A673 (cell line): ENCODE measurements at regions of chr15 and their contacts with region 1.

Region 1: DNA sequence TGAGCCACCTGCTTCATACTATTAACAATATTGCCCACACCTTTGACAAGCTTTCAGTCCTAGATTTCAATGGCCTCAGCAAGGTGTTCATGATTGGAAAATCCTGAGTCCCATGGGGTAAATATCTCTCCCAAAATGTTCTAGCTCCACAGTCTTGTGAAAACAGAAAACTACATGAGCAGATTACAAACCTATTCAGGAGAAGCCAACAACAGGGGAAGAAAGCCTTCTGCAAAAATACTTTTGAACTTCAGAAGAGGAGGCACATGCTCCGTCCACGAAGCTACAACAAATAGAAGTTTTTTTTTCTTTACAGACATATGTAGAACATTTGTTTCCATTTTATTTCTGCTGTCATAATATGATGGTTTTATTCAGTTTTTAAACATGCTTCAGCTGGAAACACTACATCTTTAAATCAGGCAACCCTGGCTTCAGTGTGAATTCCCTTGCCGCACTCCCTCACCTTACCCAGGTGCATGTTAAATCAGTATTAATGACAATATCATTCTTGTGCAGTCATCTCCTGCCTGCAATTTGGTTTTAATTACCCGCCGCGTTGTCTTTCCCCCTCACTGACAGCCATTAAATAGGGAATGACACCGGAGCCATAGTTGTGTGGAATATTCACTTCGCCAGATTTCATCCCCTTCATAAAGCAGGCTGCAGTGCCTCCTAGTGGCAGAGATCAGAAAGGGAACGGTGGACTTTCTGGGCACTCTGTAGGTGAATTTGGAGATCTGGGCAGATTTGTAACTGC is 725.5 kb upstream of the ARRDC4 start:
- DNase-seq: peak; percentile 93
- H3K4me3 ChIP-seq: peak overlapping the region; percentile 44
- H3K27ac ChIP-seq: peak overlapping the region; percentile 94
- H3K4me1 ChIP-seq: peaks cover 46% of the 10 kb centered on the region
- H3K27me3 ChIP-seq: no peaks in the 10 kb centered on the region
- CTCF ChIP-seq: peak; percentile 95

Region 2: GRCh38 chr15:96585484-96586386 is 649.3 kb before region 1 on chr15:
- CTCF ChIA-PET with region 1: no interaction called
- POLR2A ChIA-PET with region 1: no interaction called
- intact Hi-C with region 1: loop called (anchors 5 kb)
- DNase-seq: peak; percentile 70
- H3K4me3 ChIP-seq: no peak overlapping the region
- H3K27ac ChIP-seq: no peak overlapping the region
- H3K4me1 ChIP-seq: peaks cover 35% of the 10 kb centered on the region
- H3K27me3 ChIP-seq: no peaks in the 10 kb centered on the region
- CTCF ChIP-seq: peak; percentile 72

Region 3: DNA sequence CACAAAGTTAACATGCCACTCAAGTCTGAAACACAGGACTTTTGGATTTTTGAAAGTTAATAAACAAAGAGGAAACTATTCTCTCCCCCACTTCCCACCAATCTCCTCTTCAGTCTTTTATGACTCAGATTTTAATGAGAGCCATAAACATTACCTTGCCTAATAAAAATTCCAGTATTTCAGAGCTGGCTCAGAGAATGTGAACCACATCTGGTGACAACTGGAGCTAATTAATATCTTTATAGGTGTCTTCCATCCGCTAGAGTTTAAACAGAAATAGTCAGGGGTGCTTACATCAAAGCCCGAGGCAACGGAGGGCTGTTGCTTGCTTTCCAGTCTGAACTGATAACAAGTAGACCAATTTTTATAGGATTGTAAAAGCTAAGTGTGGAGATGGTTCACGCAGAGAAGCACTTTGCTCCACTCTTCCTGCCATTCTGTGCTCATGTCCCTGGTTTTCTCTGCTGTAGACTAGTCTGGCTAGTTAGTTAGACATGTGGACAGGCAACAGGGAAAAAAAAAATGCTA is 541.0 kb before region 1 on chr15:
- CTCF ChIA-PET with region 1: no interaction called
- POLR2A ChIA-PET with region 1: no interaction called
- intact Hi-C with region 1: loop called (anchors 2 kb)
- DNase-seq: peak; percentile 89
- H3K4me3 ChIP-seq: peak overlapping the region; percentile 3
- H3K27ac ChIP-seq: peak overlapping the region; percentile 72
- H3K4me1 ChIP-seq: peaks cover 56% of the 10 kb centered on the region
- H3K27me3 ChIP-seq: no peaks in the 10 kb centered on the region
- CTCF ChIP-seq: no peak

Region 4: DNA sequence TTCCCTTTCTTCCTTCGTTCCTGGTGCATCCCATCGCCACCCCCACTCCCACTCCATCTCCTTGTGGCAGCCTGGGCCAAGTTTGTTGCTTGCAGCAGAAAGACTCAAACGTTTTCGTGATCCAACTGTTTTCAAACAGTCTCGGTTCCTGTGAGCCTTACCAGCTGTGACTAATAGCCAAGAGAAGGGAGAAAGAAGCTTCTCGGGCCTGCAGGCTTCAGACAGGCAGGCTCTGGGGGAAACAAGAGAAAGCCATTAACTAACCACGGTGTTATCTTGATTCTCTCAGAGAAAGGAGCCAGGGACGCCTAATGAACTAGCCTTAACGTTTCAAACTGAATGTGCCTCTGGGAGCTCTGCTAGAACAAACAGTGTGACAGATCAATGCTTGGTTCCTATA is 162.5 kb before region 1 on chr15:
- CTCF ChIA-PET with region 1: interaction called, 12 read pairs
- POLR2A ChIA-PET with region 1: no interaction called
- intact Hi-C with region 1: loop called (anchors 1 kb)
- DNase-seq: no peak
- H3K4me3 ChIP-seq: no peak overlapping the region
- H3K27ac ChIP-seq: peak overlapping the region; percentile 72
- H3K4me1 ChIP-seq: peaks cover 56% of the 10 kb centered on the region
- H3K27me3 ChIP-seq: no peaks in the 10 kb centered on the region
- CTCF ChIP-seq: no peak

Region 5: GRCh38 chr15:97092656-97093055 is 142.4 kb before region 1 on chr15:
- CTCF ChIA-PET with region 1: no interaction called
- POLR2A ChIA-PET with region 1: no interaction called
- intact Hi-C with region 1: loop called (anchors 5 kb)
- DNase-seq: peak; percentile 80
- H3K4me3 ChIP-seq: no peak overlapping the region
- H3K27ac ChIP-seq: peak overlapping the region; percentile 85
- H3K4me1 ChIP-seq: peaks cover 63% of the 10 kb centered on the region
- H3K27me3 ChIP-seq: no peaks in the 10 kb centered on the region
- CTCF ChIP-seq: no peak

Region 6: GRCh38 chr15:97745465-97746071 is 510.5 kb after region 1 on chr15:
- CTCF ChIA-PET with region 1: no interaction called
- POLR2A ChIA-PET with region 1: no interaction called
- intact Hi-C with region 1: loop called (anchors 5 kb)
- DNase-seq: peak; percentile 75
- H3K4me3 ChIP-seq: no peak overlapping the region
- H3K27ac ChIP-seq: no peak overlapping the region
- H3K4me1 ChIP-seq: no peaks in the 10 kb centered on the region
- H3K27me3 ChIP-seq: no peaks in the 10 kb centered on the region
- CTCF ChIP-seq: peak; percentile 72